ENCODE measurements at regions of chr19 and their contacts with region 1.

Region 1: GRCh38 chr19:4369888-4370260 is 26.5 kb downstream of the MPND start:
- DNase-seq: peak; percentile 62
- H3K4me3 ChIP-seq: no peak overlapping the region
- H3K27ac ChIP-seq: peak overlapping the region; percentile 69
- H3K4me1 ChIP-seq: peaks cover 32% of the 10 kb centered on the region
- H3K27me3 ChIP-seq: no peaks in the 10 kb centered on the region
- CTCF ChIP-seq: peak; percentile 40 to 81
- POLR2A ChIP-seq: no peak

Region 2: DNA sequence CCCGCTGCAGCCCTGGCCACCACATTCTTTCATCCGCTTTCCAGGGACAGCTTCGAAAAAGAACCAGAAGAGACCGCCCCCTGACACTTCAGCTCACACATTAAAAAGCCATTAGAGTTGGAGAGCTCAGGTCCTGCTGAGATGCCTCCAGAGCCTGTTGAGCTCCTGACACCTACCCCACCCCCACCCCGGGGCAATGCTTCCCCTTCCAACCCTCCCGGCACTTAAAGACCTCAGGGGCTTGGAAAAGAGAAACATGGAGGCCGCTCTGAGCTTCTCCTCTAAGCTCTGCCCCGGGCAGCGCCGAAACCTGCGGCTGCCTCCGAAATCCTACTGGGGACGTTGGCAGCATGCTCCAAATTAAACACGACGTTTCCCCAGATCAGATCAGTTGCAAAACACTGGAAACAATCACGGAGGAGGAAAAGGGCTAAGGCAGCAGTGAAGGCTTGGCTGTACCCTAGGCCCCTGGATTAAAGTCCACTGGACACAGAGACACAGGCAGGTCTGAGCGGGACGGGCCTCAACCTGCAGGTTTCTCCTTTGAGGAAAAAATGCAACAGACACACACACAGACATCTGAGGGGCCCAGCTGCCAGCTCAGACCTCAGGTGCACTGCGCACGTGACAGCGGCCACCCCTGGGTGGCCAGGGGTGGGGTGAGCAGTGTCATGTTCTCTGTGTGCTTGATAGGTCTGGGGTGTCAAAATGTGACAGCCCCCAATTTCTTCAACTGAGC is 20.9 kb after region 1 on chr19:
- CTCF ChIA-PET with region 1: interaction called, 105 read pairs
- POLR2A ChIA-PET with region 1: no interaction called
- dilution Hi-C with region 1: no loop called
- intact Hi-C with region 1: loop called (anchors 1 kb)
- DNase-seq: peak; percentile 50
- H3K4me3 ChIP-seq: peak overlapping the region in 1 of 3 experiments; percentile 1
- H3K27ac ChIP-seq: peak overlapping the region; percentile 88
- H3K4me1 ChIP-seq: peaks cover 68% of the 10 kb centered on the region
- H3K27me3 ChIP-seq: no peaks in the 10 kb centered on the region
- CTCF ChIP-seq: no peak
- POLR2A ChIP-seq: peak; percentile 43

Region 3: GRCh38 chr19:4415352-4415751 is 45.5 kb after region 1 on chr19:
- CTCF ChIA-PET with region 1: interaction called, 3 read pairs
- POLR2A ChIA-PET with region 1: no interaction called
- dilution Hi-C with region 1: loop called (anchors 10 kb)
- intact Hi-C with region 1: no loop called
- DNase-seq: no peak
- H3K4me3 ChIP-seq: no peak overlapping the region
- H3K27ac ChIP-seq: no peak overlapping the region
- H3K4me1 ChIP-seq: no peaks in the 10 kb centered on the region
- H3K27me3 ChIP-seq: no peaks in the 10 kb centered on the region
- CTCF ChIP-seq: no peak
- POLR2A ChIP-seq: no peak

Region 4: GRCh38 chr19:4457654-4458395 is 88.0 kb after region 1 on chr19 and contains the start of gene UBXN6:
- CTCF ChIA-PET with region 1: interaction called, 13 read pairs
- POLR2A ChIA-PET with region 1: no interaction called
- dilution Hi-C with region 1: no loop called
- intact Hi-C with region 1: no loop called
- DNase-seq: peak; percentile 96
- H3K4me3 ChIP-seq: peak within 1 kb of the TSS; percentile 62 to 72 (median 69)
- H3K27ac ChIP-seq: peak within 1 kb of the TSS; percentile 43
- H3K4me1 ChIP-seq: peaks cover 14% of the 10 kb centered on the region
- H3K27me3 ChIP-seq: no peaks in the 10 kb centered on the region
- CTCF ChIP-seq: no peak
- POLR2A ChIP-seq: peak; percentile 40
- total RNA-seq, gene UBXN6: 78.5 and 84.5 TPM in 2 replicates

Measured in endothelial cell of umbilical vein (primary cell).